ENCODE measurements at regions of chr11 and their contacts with region 1.

Region 1: DNA sequence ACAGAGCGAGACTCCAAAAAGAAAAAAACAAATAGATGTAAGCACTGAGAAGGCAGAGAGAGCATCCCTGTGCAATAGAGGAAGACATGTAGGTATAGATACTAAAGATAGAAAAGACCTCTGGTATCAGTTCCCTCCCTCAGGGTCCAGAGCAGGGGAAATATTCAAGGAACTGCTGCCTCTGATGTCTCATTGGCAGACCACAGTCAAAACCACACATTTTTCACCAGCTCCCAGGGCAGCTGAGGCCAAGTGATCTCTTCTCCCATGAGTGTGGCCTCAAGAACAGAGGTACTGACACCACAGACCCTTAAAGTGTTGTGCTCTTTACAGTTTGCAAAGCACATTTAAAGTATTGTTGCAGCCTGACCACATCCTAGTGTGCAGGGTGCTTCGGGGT is 288.5 kb downstream of the NTM start:
- DNase-seq: no peak
- ATAC-seq: no peak
- H3K4me3 ChIP-seq: no peak overlapping the region
- H3K27ac ChIP-seq: no peak overlapping the region
- H3K4me1 ChIP-seq: no peaks in the 10 kb centered on the region
- H3K27me3 ChIP-seq: peaks cover 0 to 4% (median 0%) of the 10 kb centered on the region in 3 donors
- CTCF ChIP-seq: no peak

Region 2: GRCh38 chr11:131495423-131495822 is 163.5 kb before region 1 on chr11:
- intact Hi-C with region 1: loop called in 1 of 2 experiments (anchors 10 kb)
- DNase-seq: peak; percentile 47 to 71
- ATAC-seq: peak; percentile 66 to 87 (median 72)
- H3K4me3 ChIP-seq: no peak overlapping the region
- H3K27ac ChIP-seq: no peak overlapping the region
- H3K4me1 ChIP-seq: no peaks in the 10 kb centered on the region
- H3K27me3 ChIP-seq: no peaks in the 10 kb centered on the region
- CTCF ChIP-seq: no peak

Region 3: GRCh38 chr11:131694526-131695424 is 35.8 kb after region 1 on chr11:
- intact Hi-C with region 1: no loop called
- DNase-seq: peak; percentile 78 to 86
- ATAC-seq: peak; percentile 75 to 95 (median 90)
- H3K4me3 ChIP-seq: no peak overlapping the region
- H3K27ac ChIP-seq: no peak overlapping the region
- H3K4me1 ChIP-seq: no peaks in the 10 kb centered on the region
- H3K27me3 ChIP-seq: peaks cover 0 to 21% (median 0%) of the 10 kb centered on the region in 3 donors
- CTCF ChIP-seq: peak; percentile 83